H1 (cell line): ENCODE measurements at regions of chr22 and their contacts with region 1.

Region 1: DNA sequence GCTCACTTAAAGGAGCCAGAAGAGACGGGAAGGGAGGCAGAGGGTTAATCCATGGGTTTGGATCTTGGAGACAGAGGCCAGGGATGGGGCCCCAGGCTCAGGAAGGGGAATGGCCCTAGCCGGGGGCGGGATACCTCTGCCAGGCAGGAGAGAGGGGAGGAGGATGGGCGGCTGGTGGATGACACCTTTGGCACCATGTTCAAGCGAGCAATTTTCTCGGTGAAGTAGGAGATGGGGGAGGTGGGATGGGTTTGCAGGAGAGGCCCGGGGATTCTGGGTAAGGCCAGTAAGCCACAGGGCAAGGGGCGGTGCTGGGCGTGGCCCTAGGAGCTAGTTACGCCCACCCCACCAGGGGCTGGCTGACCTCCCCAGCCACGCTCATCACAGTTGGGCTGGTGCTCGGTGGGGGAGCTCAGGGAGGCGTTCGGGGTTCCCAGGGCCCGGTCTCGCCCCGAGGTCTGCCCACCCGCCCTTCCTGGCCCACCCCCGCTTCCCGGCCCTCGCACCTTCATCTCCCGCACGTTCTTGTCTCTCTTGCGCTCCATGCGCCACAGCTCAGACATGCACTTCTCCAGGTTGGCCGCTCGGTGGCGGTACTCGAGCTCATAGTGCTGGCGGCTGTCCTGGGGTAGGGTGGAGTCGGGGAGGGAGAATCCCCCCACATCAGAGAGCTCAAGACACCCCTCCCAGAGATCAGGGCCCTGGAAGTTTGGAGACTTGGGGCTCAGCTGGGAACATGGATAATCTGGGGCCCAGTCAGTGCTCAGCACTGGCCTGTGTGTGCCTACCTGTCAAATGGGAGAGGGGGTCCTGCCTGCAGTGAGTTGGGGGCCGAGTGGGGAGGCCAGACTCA is 12.7 kb downstream of the BAIAP2L2 start:
- DNase-seq: peak in 1 of 2 experiments; percentile 91
- H3K4me3 ChIP-seq: peak overlapping the region; percentile 32 to 60 (median 42)
- H3K27ac ChIP-seq: no peak overlapping the region
- H3K4me1 ChIP-seq: peaks cover 0 to 6% (median 4%) of the 10 kb centered on the region in 4 experiments; a peak in 5 of 7 replicates
- H3K27me3 ChIP-seq: no peaks in the 10 kb centered on the region
- CTCF ChIP-seq: peak; percentile 84 to 86 (median 85)
- EP300 ChIP-seq: no peak
- POLR2A ChIP-seq: no peak; a peak in 1 of 3 replicates
- RAD21 ChIP-seq: peak; percentile 65 to 74

Region 2: DNA sequence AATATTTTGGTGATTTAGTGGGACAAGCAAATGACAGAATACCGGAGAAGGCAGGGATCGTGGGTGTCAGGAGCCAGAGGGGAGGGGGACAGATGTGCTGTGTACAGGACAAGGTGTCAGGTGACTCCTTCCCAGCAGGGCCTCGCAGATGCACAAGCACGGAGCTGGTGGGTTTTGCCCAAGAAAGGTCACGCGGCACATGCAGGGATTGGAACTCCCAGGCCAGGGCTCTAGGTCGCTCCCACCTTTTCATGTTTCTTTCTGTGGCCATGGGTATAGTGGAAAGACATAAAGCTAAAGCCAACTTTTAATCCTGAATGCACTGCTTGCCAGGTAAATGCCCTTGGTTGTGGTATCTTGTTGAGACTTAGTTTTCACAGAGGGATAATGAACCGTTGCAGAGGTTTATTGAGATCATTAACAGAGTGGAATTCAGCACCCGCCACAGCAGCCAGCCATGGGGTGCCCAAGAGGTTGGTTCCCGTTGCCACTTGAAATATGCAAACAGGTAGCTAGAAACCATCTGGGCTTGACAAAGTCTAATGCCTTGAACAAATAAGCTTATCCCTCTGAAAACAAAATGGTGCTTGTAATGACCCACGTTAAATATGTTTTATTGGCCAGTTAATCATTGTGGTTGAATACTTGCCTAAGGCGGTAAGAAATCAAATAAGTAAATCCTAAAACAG is 154.5 kb before region 1 on chr22:
- CTCF ChIA-PET with region 1: no interaction called
- POLR2A ChIA-PET with region 1: no interaction called
- DNase-seq: no peak
- H3K4me3 ChIP-seq: no peak overlapping the region
- H3K27ac ChIP-seq: no peak overlapping the region
- H3K4me1 ChIP-seq: no peaks in the 10 kb centered on the region
- H3K27me3 ChIP-seq: no peaks in the 10 kb centered on the region
- CTCF ChIP-seq: no peak
- EP300 ChIP-seq: no peak
- POLR2A ChIP-seq: no peak
- RAD21 ChIP-seq: no peak

Region 3: DNA sequence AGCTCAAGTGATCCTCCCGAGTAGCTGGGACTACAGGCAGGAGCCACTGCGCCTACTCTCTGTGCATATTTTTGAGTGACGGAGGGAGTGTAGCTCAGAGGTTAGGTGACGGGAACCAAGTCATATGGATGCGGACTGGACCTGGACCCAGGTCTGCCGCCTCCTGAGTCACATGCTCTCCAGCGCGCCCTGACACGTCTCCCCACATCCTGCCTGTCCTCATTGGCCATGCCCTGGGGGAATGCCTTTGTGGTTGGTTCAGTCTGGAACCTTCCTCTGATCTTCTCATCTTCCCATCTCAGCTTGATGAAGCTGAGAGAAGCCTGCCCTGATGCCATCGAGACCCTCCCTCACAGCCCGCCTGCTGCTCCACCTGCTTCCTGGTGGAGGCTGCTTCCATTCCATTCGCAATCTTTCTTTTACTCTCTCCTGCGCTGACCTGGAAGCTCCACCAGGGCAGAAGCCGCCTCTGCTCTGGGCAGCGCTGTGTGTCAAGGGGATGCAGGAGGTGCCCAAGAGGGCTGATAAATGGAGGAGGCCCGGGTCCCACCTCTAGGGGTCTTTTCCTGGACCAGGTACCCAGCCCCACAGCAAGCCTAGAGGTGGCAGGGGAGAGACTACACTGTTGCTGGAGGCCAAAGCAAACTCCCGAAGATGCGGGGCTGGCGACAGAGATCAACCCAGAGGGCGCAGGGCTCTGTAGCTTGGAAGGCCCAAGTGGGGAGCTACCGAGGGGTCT is 26.6 kb after region 1 on chr22:
- CTCF ChIA-PET with region 1: interaction called, 34 read pairs
- POLR2A ChIA-PET with region 1: no interaction called
- DNase-seq: no peak
- H3K4me3 ChIP-seq: no peak overlapping the region
- H3K27ac ChIP-seq: no peak overlapping the region
- H3K4me1 ChIP-seq: peaks cover 0 to 3% (median 0%) of the 10 kb centered on the region in 4 experiments; a peak in 4 of 7 replicates
- H3K27me3 ChIP-seq: no peaks in the 10 kb centered on the region
- CTCF ChIP-seq: peak; percentile 44 to 68 (median 59)
- EP300 ChIP-seq: no peak
- POLR2A ChIP-seq: no peak
- RAD21 ChIP-seq: peak; percentile 17 to 44; a peak in 1 of 4 replicates

Region 4: DNA sequence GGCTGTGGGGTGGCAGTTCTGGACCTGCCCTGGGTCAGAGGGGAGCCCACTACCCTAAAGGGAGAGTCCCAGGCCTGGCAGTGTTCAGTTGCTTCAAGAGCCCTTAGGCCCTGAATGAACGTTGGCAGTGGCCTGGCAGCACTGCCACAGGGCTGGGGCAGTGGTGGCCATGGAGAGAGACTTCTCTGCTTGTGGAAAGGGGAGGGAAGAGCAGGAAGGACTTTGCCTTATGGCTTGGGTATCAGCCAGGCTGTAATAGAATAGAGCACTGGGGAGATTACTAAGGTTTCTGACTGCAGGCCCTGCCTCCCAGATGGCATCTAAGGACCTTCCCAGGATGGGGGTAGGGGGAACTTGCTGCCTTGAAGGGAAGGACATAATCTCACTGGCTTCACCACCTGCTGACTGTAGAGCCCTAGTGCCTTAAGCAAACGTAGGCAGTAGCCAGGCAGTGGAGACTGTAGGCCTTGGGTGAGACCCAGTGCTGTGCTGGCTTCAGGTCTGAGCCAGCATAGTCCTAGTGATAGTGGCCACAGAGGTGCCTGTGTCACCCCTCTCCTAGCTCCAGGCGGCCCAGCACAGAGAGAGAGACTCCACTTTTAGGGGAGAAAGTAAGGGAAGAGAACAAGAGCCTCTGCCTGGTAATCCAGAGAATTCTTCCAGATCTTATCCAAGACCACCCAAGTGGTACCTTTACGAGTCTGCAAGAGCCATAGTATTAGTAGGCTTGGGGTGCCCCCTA is 56.2 kb after region 1 on chr22:
- CTCF ChIA-PET with region 1: interaction called, 23 read pairs
- POLR2A ChIA-PET with region 1: no interaction called
- DNase-seq: peak in 1 of 2 experiments; percentile 62
- H3K4me3 ChIP-seq: no peak overlapping the region
- H3K27ac ChIP-seq: no peak overlapping the region
- H3K4me1 ChIP-seq: peaks cover 0 to 7% (median under 1%) of the 10 kb centered on the region in 4 experiments; a peak in 3 of 7 replicates
- H3K27me3 ChIP-seq: no peaks in the 10 kb centered on the region
- CTCF ChIP-seq: peak in 1 of 3 experiments; percentile 49; a peak in 2 of 4 replicates
- EP300 ChIP-seq: no peak
- POLR2A ChIP-seq: no peak
- RAD21 ChIP-seq: peak; percentile 70 to 72

Region 5: GRCh38 chr22:38176170-38176741 is 78.5 kb after region 1 on chr22:
- CTCF ChIA-PET with region 1: interaction called, 24 read pairs
- POLR2A ChIA-PET with region 1: no interaction called
- DNase-seq: no peak
- H3K4me3 ChIP-seq: no peak overlapping the region
- H3K27ac ChIP-seq: no peak overlapping the region
- H3K4me1 ChIP-seq: peaks cover 0 to 16% (median 8%) of the 10 kb centered on the region in 4 experiments; a peak in 6 of 7 replicates
- H3K27me3 ChIP-seq: no peaks in the 10 kb centered on the region
- CTCF ChIP-seq: no peak
- EP300 ChIP-seq: no peak
- POLR2A ChIP-seq: no peak
- RAD21 ChIP-seq: no peak

Region 6: DNA sequence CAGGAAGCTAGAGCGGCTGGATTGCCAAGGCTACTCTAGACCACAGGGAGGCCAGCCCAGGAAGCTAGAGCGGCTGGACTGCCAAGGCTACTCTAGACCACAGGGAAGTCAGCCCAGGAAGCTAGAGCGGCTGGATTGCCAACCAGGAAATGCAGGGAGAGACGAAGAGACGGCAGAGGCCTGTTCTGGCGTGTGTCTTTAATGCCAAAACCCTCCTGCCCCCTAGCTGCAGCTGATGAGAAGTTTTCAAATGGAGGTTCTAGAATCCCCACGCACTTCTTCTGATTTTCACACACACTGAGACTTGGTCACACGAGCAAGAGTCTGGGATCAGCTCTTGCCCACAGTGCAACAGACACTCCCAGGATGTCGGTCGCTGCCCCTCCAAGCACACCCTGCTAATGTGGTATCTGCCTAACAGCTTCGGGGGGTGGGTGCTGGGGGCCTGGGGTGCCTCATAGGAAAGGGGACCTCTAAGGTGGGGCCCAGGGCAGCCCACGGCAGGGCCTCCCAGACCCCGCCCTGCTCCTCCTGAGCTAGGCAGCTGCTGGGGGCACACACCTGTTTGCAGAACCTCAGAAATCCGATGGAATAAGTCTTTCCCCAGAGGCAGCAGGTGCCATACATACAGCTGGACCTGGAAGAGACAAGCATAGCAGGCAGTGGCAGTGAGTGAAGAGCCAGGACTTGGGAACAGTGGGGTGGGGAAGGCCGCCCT is 132.5 kb after region 1 on chr22:
- CTCF ChIA-PET with region 1: interaction called, 12 read pairs
- POLR2A ChIA-PET with region 1: no interaction called
- DNase-seq: no peak
- H3K4me3 ChIP-seq: no peak overlapping the region
- H3K27ac ChIP-seq: no peak overlapping the region
- H3K4me1 ChIP-seq: no peaks in the 10 kb centered on the region
- H3K27me3 ChIP-seq: no peaks in the 10 kb centered on the region; a peak in 1 of 7 replicates
- CTCF ChIP-seq: peak; percentile 45 to 65 (median 55)
- EP300 ChIP-seq: no peak
- POLR2A ChIP-seq: no peak
- RAD21 ChIP-seq: peak; percentile 69